Common myeloid progenitor, CD34-positive (primary cell): ENCODE measurements at regions of chr9 and their contacts with region 1.

Region 1: GRCh38 chr9:6428940-6429889 is 16.2 kb downstream of the UHRF2 start:
- DNase-seq: peak; percentile 31 to 81 (median 71)
- H3K4me3 ChIP-seq: no peak overlapping the region
- H3K27ac ChIP-seq: no peak overlapping the region
- H3K4me1 ChIP-seq: peaks cover 0 to 18% (median 7%) of the 10 kb centered on the region in 4 experiments
- H3K27me3 ChIP-seq: no peaks in the 10 kb centered on the region

Region 2: DNA sequence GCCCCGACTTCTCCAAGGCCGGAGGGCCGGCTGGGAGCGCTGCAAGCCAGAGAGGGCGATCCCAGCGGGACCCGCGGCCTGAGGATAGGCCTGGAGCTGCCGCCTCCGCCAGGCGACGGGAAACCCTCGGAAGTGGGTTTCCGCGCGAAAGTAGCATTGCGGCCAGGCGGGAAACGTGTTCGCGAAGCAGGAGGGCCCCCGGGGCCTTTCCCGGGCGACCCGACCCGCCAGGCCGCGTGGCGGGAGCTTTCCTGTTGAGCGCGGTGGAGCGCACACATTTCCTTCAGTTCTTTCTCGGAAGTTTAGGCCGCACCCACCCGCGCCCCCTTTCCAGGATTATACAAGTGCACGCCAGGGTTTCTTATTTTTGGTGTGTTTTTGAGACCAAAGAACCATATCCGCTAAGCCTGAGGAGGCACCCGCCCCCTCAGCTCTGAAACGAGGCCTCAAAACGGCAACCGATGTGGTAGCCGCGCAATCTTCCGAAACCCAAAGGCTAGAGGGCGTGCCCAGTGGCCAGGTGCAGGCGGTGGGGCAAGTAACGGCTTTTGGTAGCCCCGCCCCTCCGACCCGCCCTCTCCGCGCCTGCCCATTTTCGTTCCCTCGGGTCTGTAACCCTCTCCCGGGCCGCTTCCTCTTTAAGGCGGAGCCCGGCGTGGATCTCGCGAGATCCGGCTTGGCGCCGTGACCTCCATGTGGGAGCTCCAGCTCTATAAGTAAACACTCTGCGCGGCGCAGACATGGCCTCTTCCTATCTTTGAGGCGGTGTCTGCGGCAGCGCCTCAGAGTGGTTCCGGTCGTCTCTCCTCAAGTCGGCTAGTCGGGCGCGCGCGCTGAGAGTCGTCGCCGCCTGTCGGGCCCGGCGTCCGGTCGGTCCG is 16.5 kb before region 1 on chr9 and contains the start of gene UHRF2:
- CTCF ChIA-PET with region 1: interaction called, 13 read pairs
- POLR2A ChIA-PET with region 1: interaction called, 10 read pairs
- DNase-seq: peak; percentile 99 to 100 (median 99)
- H3K4me3 ChIP-seq: peak within 1 kb of the TSS; percentile 91 to 98 (median 95)
- H3K27ac ChIP-seq: peak within 1 kb of the TSS; percentile 78 to 92
- H3K4me1 ChIP-seq: peaks cover 22 to 35% (median 29%) of the 10 kb centered on the region in 4 experiments
- H3K27me3 ChIP-seq: no peaks in the 10 kb centered on the region